Right ventricle myocardium inferior (tissue), 1 donor: ENCODE measurements at regions of chr6 and their contacts with region 1.

Region 1: DNA sequence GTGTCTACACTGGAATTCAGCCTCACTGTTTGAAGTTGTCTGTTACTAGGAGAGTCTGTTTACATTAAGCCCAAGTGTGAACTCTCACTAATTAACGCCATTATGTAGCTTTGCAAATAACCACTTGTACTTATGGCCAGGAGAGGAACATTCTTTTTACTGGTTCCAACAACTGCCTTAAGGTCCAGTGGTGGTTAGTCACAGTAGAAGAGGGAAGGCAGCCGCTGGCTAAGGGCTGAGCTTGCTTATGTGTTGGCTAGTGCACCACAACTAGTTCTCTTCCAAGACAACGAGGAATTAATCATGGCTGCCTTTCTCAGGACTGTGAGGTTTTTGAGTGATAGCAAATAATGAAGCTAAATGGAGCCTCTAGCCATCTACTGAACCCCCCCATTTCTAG is 14.9 kb upstream of the SLC22A23 start:
- DNase-seq: no peak
- ATAC-seq: no peak

Region 2: GRCh38 chr6:3546121-3546520 is 74.4 kb after region 1 on chr6:
- intact Hi-C with region 1: loop called (anchors 2 kb)
- DNase-seq: no peak
- ATAC-seq: no peak

Region 3: GRCh38 chr6:3943331-3943765 is 471.6 kb after region 1 on chr6:
- intact Hi-C with region 1: loop called (anchors 10 kb)
- DNase-seq: no peak
- ATAC-seq: no peak